ENCODE measurements at regions of chr15 and their contacts with region 1.

Region 1: GRCh38 chr15:60520825-60521368 is 42.0 kb upstream of the ICE2 start:
- DNase-seq: peak; percentile 62 to 83 (median 70)
- H3K4me3 ChIP-seq: no peak overlapping the region
- H3K4me3 Mint-ChIP-seq: peak overlapping the region in 2 of 7 donors; percentile 23 to 53
- H3K27ac ChIP-seq: no peak overlapping the region
- H3K27ac Mint-ChIP-seq: peak overlapping the region; percentile 60 to 96 (median 78)
- H3K4me1 ChIP-seq: peaks cover 14% of the 10 kb centered on the region
- H3K4me1 Mint-ChIP-seq: peaks cover 60 to 84% (median 73%) of the 10 kb centered on the region in 3 donors
- H3K27me3 ChIP-seq: no peaks in the 10 kb centered on the region
- H3K27me3 Mint-ChIP-seq: no peaks in the 10 kb centered on the region

Region 2: DNA sequence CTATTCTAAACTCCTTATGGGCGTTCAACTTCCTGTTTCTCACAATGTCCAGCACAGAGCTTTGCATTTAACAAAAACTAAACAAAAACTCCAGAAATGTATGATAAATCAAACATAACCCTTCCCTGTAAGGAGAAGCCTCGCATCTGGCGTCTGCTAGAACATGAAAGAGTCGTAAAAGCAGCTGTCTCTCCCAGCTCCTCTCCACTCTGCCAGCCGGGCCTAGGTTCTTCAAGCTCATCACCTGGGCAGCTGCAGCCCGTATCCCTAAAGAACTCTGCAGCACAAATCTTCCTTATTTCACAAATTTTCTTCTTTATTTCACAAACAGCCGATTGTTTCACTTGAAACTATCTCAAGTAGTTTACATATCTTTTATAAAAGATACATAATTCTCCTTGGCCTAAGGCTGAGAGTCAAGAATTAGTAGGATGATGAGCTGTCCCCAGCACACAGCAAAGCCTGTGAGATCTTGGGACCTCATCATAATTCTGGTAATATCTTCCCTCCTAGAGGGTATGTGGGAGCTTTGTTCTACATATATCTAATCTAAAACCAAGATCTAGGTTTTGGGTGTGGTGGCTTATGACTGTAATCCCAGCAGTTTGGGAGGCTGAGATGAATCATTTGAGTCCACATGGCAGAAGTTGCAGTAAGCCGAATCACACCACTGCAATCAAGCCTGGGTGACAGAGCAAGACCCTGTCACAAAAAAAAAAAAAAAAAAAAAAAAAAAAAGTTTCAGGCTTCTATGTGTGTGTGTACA is 158.4 kb before region 1 on chr15:
- CTCF ChIA-PET with region 1: interaction called, 10 read pairs
- POLR2A ChIA-PET with region 1: no interaction called
- DNase-seq: no peak
- H3K4me3 ChIP-seq: no peak overlapping the region
- H3K4me3 Mint-ChIP-seq: no peak overlapping the region
- H3K27ac ChIP-seq: no peak overlapping the region
- H3K27ac Mint-ChIP-seq: peak overlapping the region; percentile 5 to 96 (median 48)
- H3K4me1 ChIP-seq: peaks cover 11% of the 10 kb centered on the region
- H3K4me1 Mint-ChIP-seq: peaks cover 20 to 34% (median 28%) of the 10 kb centered on the region in 3 donors
- H3K27me3 ChIP-seq: no peaks in the 10 kb centered on the region
- H3K27me3 Mint-ChIP-seq: peaks cover 0 to 3% of the 10 kb centered on the region in 2 donors

Region 3: GRCh38 chr15:60469893-60470641 is 50.8 kb before region 1 on chr15:
- CTCF ChIA-PET with region 1: no interaction called
- POLR2A ChIA-PET with region 1: no interaction called
- DNase-seq: no peak
- H3K4me3 ChIP-seq: no peak overlapping the region
- H3K4me3 Mint-ChIP-seq: no peak overlapping the region
- H3K27ac ChIP-seq: no peak overlapping the region
- H3K27ac Mint-ChIP-seq: peak overlapping the region in 2 of 8 donors; percentile 3 to 26
- H3K4me1 ChIP-seq: no peaks in the 10 kb centered on the region
- H3K4me1 Mint-ChIP-seq: peaks cover 17 to 40% (median 40%) of the 10 kb centered on the region in 3 donors
- H3K27me3 ChIP-seq: no peaks in the 10 kb centered on the region
- H3K27me3 Mint-ChIP-seq: no peaks in the 10 kb centered on the region

Region 4: GRCh38 chr15:60531801-60532200 is 10.9 kb after region 1 on chr15:
- CTCF ChIA-PET with region 1: interaction called, 17 read pairs
- POLR2A ChIA-PET with region 1: no interaction called
- DNase-seq: no peak
- H3K4me3 ChIP-seq: no peak overlapping the region
- H3K4me3 Mint-ChIP-seq: peak overlapping the region in 2 of 7 donors; percentile 16 to 29
- H3K27ac ChIP-seq: no peak overlapping the region
- H3K27ac Mint-ChIP-seq: peak overlapping the region in 7 of 8 donors; percentile 12 to 99 (median 73)
- H3K4me1 ChIP-seq: peaks cover 57% of the 10 kb centered on the region
- H3K4me1 Mint-ChIP-seq: peaks cover 87 to 98% (median 97%) of the 10 kb centered on the region in 3 donors
- H3K27me3 ChIP-seq: no peaks in the 10 kb centered on the region
- H3K27me3 Mint-ChIP-seq: no peaks in the 10 kb centered on the region

Region 5: GRCh38 chr15:60546744-60547143 is 25.8 kb after region 1 on chr15:
- CTCF ChIA-PET with region 1: interaction called, 18 read pairs
- POLR2A ChIA-PET with region 1: interaction called, 4 read pairs
- DNase-seq: peak in 2 of 5 donors; percentile 24 to 41
- H3K4me3 ChIP-seq: no peak overlapping the region
- H3K4me3 Mint-ChIP-seq: peak overlapping the region; percentile 26 to 79 (median 55)
- H3K27ac ChIP-seq: no peak overlapping the region
- H3K27ac Mint-ChIP-seq: peak overlapping the region; percentile 92 to 99 (median 95)
- H3K4me1 ChIP-seq: peaks cover 95% of the 10 kb centered on the region
- H3K4me1 Mint-ChIP-seq: peaks cover 93 to 98% (median 98%) of the 10 kb centered on the region in 3 donors
- H3K27me3 ChIP-seq: no peaks in the 10 kb centered on the region
- H3K27me3 Mint-ChIP-seq: no peaks in the 10 kb centered on the region

Region 6: DNA sequence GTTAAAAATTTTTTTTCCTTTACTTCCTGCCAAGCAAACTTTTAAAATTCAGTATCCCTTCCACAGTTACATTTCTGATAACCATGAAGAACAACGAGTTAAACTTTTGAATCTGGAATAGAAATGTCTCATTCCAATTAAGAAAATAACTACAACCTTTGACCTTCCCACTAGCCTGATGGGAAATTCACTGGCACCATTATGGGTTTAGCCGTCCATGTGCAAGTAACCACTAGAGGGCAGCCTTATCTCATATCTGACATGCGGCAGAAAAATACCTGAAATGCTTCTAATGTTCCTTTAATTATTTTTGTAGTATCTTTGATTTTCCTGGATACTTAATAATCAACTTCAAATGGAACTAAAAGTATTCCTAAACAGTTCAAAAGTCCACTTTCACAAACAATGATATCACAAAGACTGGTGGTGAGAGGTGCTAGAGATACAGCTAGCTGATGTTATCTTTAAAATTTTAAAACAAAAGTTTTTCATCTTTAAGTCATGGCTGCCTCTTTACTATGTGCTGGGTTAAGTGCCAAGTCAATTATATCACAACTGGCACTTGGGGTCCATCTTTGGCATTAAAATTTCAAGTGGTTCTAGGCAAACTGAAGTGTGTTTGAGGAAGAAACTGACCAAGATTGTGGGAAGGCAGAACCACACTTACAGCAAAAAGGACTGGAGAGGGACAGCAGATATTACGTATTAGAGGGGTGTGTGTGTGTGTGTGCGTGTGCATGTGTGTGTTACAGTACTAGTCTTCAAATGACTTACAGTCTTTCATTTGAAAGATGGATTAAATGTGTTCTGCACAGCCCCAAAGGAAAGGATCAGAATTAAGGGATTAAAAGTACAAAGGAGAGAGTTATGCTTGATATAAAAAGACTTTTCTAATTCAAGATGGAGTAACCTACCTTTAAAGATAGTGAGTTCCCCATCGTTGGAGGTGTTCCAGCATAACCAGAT is 65.1 kb after region 1 on chr15:
- CTCF ChIA-PET with region 1: interaction called, 23 read pairs
- POLR2A ChIA-PET with region 1: interaction called, 5 read pairs
- DNase-seq: peak in 4 of 5 donors; percentile 48 to 76 (median 74)
- H3K4me3 ChIP-seq: peak overlapping the region; percentile 16
- H3K4me3 Mint-ChIP-seq: peak overlapping the region; percentile 67 to 94 (median 81)
- H3K27ac ChIP-seq: no peak overlapping the region
- H3K27ac Mint-ChIP-seq: peak overlapping the region; percentile 66 to 99 (median 94)
- H3K4me1 ChIP-seq: peaks cover 92% of the 10 kb centered on the region
- H3K4me1 Mint-ChIP-seq: peaks cover 86 to 98% (median 93%) of the 10 kb centered on the region in 3 donors
- H3K27me3 ChIP-seq: no peaks in the 10 kb centered on the region
- H3K27me3 Mint-ChIP-seq: peaks cover 0 to 2% of the 10 kb centered on the region in 2 donors

Region 7: GRCh38 chr15:60916679-60917460 is 396.0 kb after region 1 on chr15:
- CTCF ChIA-PET with region 1: interaction called, 16 read pairs
- POLR2A ChIA-PET with region 1: no interaction called
- DNase-seq: peak; percentile 77 to 91 (median 78)
- H3K4me3 ChIP-seq: no peak overlapping the region
- H3K4me3 Mint-ChIP-seq: peak overlapping the region in 1 of 7 donors; percentile 44
- H3K27ac ChIP-seq: no peak overlapping the region
- H3K27ac Mint-ChIP-seq: peak overlapping the region; percentile 40 to 90 (median 72)
- H3K4me1 ChIP-seq: peaks cover 6% of the 10 kb centered on the region
- H3K4me1 Mint-ChIP-seq: peaks cover 11 to 12% (median 11%) of the 10 kb centered on the region in 3 donors
- H3K27me3 ChIP-seq: no peaks in the 10 kb centered on the region
- H3K27me3 Mint-ChIP-seq: peaks cover 0 to 2% of the 10 kb centered on the region in 2 donors